Spleen (tissue), 13 donors: ENCODE measurements at regions of chr10 and their contacts with region 1.

Region 1: GRCh38 chr10:79445141-79445976 is at the start of gene ZCCHC24:
- DNase-seq: peak; percentile 99
- H3K4me3 ChIP-seq: peak within 1 kb of the TSS; percentile 72 to 97 (median 86)
- H3K27ac ChIP-seq: peak within 1 kb of the TSS; percentile 66 to 91 (median 84)
- H3K4me1 ChIP-seq: peaks cover 11 to 60% (median 43%) of the 10 kb centered on the region in 6 donors
- H3K27me3 ChIP-seq: peaks cover 0 to 6% (median 0%) of the 10 kb centered on the region in 7 donors
- CTCF ChIP-seq: peak in 3 of 11 experiments; percentile 10 to 33 (median 11)
- POLR2A ChIP-seq: peak in 2 of 3 donors; percentile 50 to 51
- total RNA-seq, gene ZCCHC24: 12.6 to 34.1 (median 27.1) TPM

Region 2: GRCh38 chr10:80205478-80206276 is 760.3 kb after region 1 on chr10 and contains the start of gene ANXA11:
- intact Hi-C with region 1: loop called (anchors 10 kb)
- DNase-seq: peak; percentile 96
- H3K4me3 ChIP-seq: peak within 1 kb of the TSS; percentile 53 to 97 (median 84)
- H3K27ac ChIP-seq: peak within 1 kb of the TSS; percentile 95 to 99 (median 98)
- H3K4me1 ChIP-seq: peaks cover 23 to 68% (median 52%) of the 10 kb centered on the region in 6 donors
- H3K27me3 ChIP-seq: no peaks in the 10 kb centered on the region
- CTCF ChIP-seq: peak in 2 of 11 experiments; percentile 2 to 6
- POLR2A ChIP-seq: peak; percentile 23 to 78 (median 27)
- total RNA-seq, gene ANXA11: 102 to 201 (median 157) TPM